ENCODE measurements at regions of chr6 and their contacts with region 1.

Region 1: DNA sequence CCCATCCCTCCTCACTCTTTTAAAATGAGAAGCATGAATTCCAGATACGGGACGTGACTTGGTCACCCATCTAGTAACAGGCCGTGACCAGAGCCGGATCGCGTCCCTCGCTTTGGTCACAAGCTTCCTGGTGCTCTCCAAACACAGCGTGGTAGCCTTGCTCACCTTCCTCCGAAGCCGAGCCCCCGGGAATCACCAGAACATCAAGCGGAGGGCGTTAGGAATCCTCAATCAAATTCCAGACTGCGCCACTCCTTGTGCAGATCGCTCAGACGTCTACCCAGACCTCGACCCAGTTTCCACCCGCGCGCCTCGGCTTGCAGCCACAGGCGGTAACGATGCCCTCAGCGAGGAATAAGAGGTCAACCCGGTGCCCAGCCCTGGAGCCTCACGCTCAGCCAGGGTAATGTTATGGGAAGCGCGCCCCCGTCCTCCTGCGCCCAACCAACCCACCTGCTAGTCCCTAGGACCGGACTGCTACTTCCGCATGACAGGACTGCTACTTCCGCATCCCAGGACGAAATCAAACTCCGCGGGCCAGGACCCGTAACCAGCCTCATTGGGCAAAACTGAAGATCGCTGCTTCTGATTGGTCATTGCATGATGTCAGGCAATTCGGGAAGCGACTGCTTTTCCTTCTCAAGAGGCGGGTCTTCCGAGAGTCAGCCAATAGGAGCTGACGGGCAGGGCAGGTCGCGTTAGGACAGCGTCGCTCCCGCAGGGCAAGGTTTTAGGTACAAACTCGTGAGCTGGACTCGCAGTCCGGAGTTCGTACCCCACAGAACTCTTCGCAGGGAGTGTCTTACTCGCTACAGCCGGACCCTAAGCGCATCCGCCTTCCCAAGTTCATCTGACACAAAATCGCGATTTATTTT is at the start of gene MTFR2:
- DNase-seq: peak; percentile 74
- ATAC-seq: peak; percentile 97
- H3K4me3 Mint-ChIP-seq: peak within 1 kb of the TSS; percentile 89
- H3K27ac Mint-ChIP-seq: peak within 1 kb of the TSS; percentile 57
- H3K4me1 Mint-ChIP-seq: peaks cover 27% of the 10 kb centered on the region
- H3K27me3 Mint-ChIP-seq: no peaks in the 10 kb centered on the region
- CTCF ChIP-seq: no peak
- total RNA-seq, gene MTFR2: 2.5 and 3.5 TPM in 2 replicates

Region 2: GRCh38 chr6:136550330-136551071 is 300.5 kb after region 1 on chr6 and contains the start of gene MAP7:
- CTCF ChIA-PET with region 1: no interaction called
- POLR2A ChIA-PET with region 1: no interaction called
- intact Hi-C with region 1: loop called (anchors 10 kb)
- DNase-seq: peak; percentile 63
- ATAC-seq: peak; percentile 81
- H3K4me3 Mint-ChIP-seq: peak within 1 kb of the TSS; percentile 71
- H3K27ac Mint-ChIP-seq: no peak within 1 kb of the TSS
- H3K4me1 Mint-ChIP-seq: peaks cover 9% of the 10 kb centered on the region
- H3K27me3 Mint-ChIP-seq: peaks cover 32% of the 10 kb centered on the region
- CTCF ChIP-seq: peak; percentile 78
- total RNA-seq, gene MAP7: 0.35 and 0.56 TPM in 2 replicates

Region 3: DNA sequence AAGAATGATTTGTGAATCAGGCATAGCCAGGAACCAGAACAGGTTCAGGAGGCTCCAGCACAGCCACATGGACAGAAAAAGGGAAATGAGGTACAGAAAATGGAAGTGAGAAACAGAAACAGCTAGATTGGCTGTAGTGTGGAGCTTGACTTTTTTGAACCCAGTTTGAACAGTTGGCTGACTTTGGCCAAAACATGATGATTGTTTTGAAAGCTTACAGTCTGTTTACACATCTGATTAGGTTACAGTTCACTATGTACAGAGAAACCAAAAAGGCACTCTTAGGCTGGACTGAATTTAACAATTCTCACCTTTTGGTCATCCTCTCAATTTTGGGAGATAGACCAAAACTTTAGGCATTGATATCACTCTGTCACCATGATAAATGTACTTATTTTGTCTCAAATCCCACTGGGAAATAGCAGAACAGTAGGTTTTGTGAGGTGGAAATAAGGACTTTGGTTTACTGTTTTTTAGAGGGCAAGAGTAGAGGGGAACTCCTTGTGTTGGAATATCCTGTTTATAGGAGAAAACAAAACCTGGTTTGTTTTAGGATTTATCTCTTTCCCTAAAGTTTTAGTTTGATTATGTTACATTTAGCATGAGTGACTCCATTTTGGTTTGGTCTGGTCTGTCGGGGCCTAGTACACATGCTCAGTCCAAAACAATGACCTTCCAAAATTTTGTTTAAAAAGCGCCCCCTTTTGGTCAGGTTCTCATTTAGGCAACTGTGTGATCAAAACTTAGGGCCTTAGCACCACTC is 1121.0 kb after region 1 on chr6:
- CTCF ChIA-PET with region 1: no interaction called
- POLR2A ChIA-PET with region 1: no interaction called
- intact Hi-C with region 1: no loop called
- DNase-seq: no peak
- ATAC-seq: peak; percentile 64
- H3K4me3 Mint-ChIP-seq: peak overlapping the region; percentile 53
- H3K27ac Mint-ChIP-seq: peak overlapping the region; percentile 71
- H3K4me1 Mint-ChIP-seq: peaks cover 31% of the 10 kb centered on the region
- H3K27me3 Mint-ChIP-seq: no peaks in the 10 kb centered on the region
- CTCF ChIP-seq: no peak